A673 (cell line): ENCODE measurements at regions of chr12 and their contacts with region 1.

Region 1: GRCh38 chr12:96356831-96357230 is 43.4 kb downstream of the CDK17 start:
- DNase-seq: no peak
- H3K4me3 ChIP-seq: no peak overlapping the region
- H3K27ac ChIP-seq: no peak overlapping the region
- H3K4me1 ChIP-seq: peaks cover 32% of the 10 kb centered on the region
- H3K27me3 ChIP-seq: no peaks in the 10 kb centered on the region
- CTCF ChIP-seq: no peak

Region 2: GRCh38 chr12:96285158-96285557 is 71.7 kb before region 1 on chr12:
- CTCF ChIA-PET with region 1: interaction called, 10 read pairs
- POLR2A ChIA-PET with region 1: no interaction called
- intact Hi-C with region 1: no loop called
- DNase-seq: no peak
- H3K4me3 ChIP-seq: no peak overlapping the region
- H3K27ac ChIP-seq: no peak overlapping the region
- H3K4me1 ChIP-seq: no peaks in the 10 kb centered on the region
- H3K27me3 ChIP-seq: no peaks in the 10 kb centered on the region
- CTCF ChIP-seq: no peak

Region 3: GRCh38 chr12:96434107-96434506 is 77.3 kb after region 1 on chr12:
- CTCF ChIA-PET with region 1: no interaction called
- POLR2A ChIA-PET with region 1: no interaction called
- intact Hi-C with region 1: no loop called
- DNase-seq: no peak
- H3K4me3 ChIP-seq: no peak overlapping the region
- H3K27ac ChIP-seq: no peak overlapping the region
- H3K4me1 ChIP-seq: no peaks in the 10 kb centered on the region
- H3K27me3 ChIP-seq: no peaks in the 10 kb centered on the region
- CTCF ChIP-seq: no peak

Region 4: GRCh38 chr12:97650242-97650641 is 1293.4 kb after region 1 on chr12:
- CTCF ChIA-PET with region 1: no interaction called
- POLR2A ChIA-PET with region 1: no interaction called
- intact Hi-C with region 1: no loop called
- DNase-seq: no peak
- H3K4me3 ChIP-seq: no peak overlapping the region
- H3K27ac ChIP-seq: no peak overlapping the region
- H3K4me1 ChIP-seq: no peaks in the 10 kb centered on the region
- H3K27me3 ChIP-seq: no peaks in the 10 kb centered on the region
- CTCF ChIP-seq: no peak